Gastrocnemius medialis (tissue), 4 donors: ENCODE measurements at regions of chr1 and their contacts with region 1.

Region 1: GRCh38 chr1:153670859-153671627 is at the start of gene ILF2:
- DNase-seq: peak; percentile 98 to 99
- ATAC-seq: peak; percentile 99 to 100
- H3K4me3 ChIP-seq: peak within 1 kb of the TSS; percentile 72 to 99 (median 86)
- H3K27ac ChIP-seq: peak within 1 kb of the TSS; percentile 87 to 90 (median 89)
- H3K4me1 ChIP-seq: peaks cover 15 to 17% of the 10 kb centered on the region in 2 donors
- H3K27me3 ChIP-seq: no peaks in the 10 kb centered on the region
- CTCF ChIP-seq: no peak
- POLR2A ChIP-seq: peak; percentile 97
- total RNA-seq, gene ILF2: 110 to 138 (median 117) TPM

Region 2: GRCh38 chr1:153572569-153573015 is 98.5 kb before region 1 on chr1:
- in situ Hi-C with region 1: no loop called
- intact Hi-C with region 1: loop called (anchors 5 kb)
- DNase-seq: peak; percentile 80 to 88
- ATAC-seq: peak; percentile 83 to 86
- H3K4me3 ChIP-seq: no peak overlapping the region
- H3K27ac ChIP-seq: peak overlapping the region; percentile 59 to 77 (median 67)
- H3K4me1 ChIP-seq: peaks cover 14 to 27% of the 10 kb centered on the region in 2 donors
- H3K27me3 ChIP-seq: no peaks in the 10 kb centered on the region
- CTCF ChIP-seq: peak; percentile 78 to 90 (median 84)
- POLR2A ChIP-seq: no peak

Region 3: DNA sequence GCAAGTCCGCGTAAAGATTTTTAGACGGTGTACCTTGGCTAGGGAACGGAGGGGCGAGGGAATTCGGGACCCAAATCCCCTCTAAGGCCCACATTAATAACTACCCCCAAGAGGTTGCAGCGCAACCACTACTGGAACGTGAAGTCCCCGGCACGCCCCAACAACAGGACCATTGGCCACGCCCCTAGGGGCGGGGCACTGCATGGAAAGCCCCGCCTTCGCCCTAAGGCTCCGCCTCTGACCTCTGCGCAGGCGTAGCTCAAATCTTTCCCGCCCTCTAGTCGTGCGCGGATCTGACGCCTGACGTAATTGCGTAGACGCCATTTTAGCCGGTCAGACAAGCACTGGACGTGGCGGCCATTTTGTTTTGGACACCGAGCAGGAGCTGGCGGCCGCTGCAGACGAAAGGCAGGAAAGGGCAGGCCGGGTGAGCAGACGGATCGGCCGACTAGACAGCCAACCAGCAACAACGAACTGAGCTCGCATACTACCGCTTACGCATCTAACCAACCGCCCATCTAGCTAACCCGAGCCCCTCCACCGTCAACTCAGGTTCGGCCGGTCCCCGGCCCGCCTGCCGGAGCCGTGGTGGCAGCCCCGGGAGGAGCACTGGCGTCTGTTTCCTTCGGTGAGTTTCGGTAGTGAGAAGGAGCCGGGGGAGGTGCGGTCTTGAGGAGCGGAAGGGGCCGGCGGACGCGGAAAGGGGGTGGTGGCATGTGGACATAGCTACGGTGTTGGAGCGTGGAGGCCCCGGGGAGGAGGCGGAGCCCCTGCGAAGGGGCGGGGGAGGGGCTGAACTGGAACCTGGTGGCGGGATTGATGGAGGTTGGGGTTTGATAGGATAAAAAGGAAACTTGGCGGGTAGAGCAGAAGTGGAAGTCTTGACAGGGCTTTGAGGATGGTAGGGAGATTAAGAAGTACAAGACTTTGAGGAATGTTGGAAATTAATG is 37.1 kb before region 1 on chr1 and contains the start of gene CHTOP:
- in situ Hi-C with region 1: no loop called
- intact Hi-C with region 1: no loop called
- DNase-seq: peak; percentile 98 to 99
- ATAC-seq: peak; percentile 77 to 88
- H3K4me3 ChIP-seq: peak within 1 kb of the TSS; percentile 68 to 99 (median 94)
- H3K27ac ChIP-seq: peak within 1 kb of the TSS; percentile 95 to 100 (median 100)
- H3K4me1 ChIP-seq: peaks cover 61 to 75% of the 10 kb centered on the region in 2 donors
- H3K27me3 ChIP-seq: no peaks in the 10 kb centered on the region
- CTCF ChIP-seq: peak in 1 of 5 experiments; percentile 24
- POLR2A ChIP-seq: peak; percentile 83 to 91
- total RNA-seq, gene CHTOP: 49.5 to 73.4 (median 59.1) TPM

Region 4: GRCh38 chr1:153727463-153728304 is 56.6 kb after region 1 on chr1 and contains the start of gene INTS3:
- in situ Hi-C with region 1: no loop called
- intact Hi-C with region 1: loop called (anchors 5 kb)
- DNase-seq: peak; percentile 100
- ATAC-seq: peak; percentile 99 to 100
- H3K4me3 ChIP-seq: peak within 1 kb of the TSS; percentile 77 to 96 (median 88)
- H3K27ac ChIP-seq: peak within 1 kb of the TSS; percentile 95 to 100 (median 98)
- H3K4me1 ChIP-seq: peaks cover 20 to 24% of the 10 kb centered on the region in 2 donors
- H3K27me3 ChIP-seq: no peaks in the 10 kb centered on the region
- CTCF ChIP-seq: peak in 2 of 5 experiments; percentile 12 to 32
- POLR2A ChIP-seq: peak; percentile 42 to 52
- total RNA-seq, gene INTS3: 16.1 to 28.0 (median 19.9) TPM

Region 5: GRCh38 chr1:153775458-153776327 is 104.7 kb after region 1 on chr1:
- in situ Hi-C with region 1: loop called in 1 of 4 experiments (anchors 10 kb)
- intact Hi-C with region 1: no loop called
- DNase-seq: no peak
- ATAC-seq: peak; percentile 38 to 43
- H3K4me3 ChIP-seq: peak overlapping the region; percentile 60 to 72 (median 68)
- H3K27ac ChIP-seq: peak overlapping the region; percentile 65 to 75 (median 70)
- H3K4me1 ChIP-seq: peaks cover 32 to 45% of the 10 kb centered on the region in 2 donors
- H3K27me3 ChIP-seq: no peaks in the 10 kb centered on the region
- CTCF ChIP-seq: no peak
- POLR2A ChIP-seq: no peak